GM12878 (cell line): ENCODE measurements at regions of chr15 and their contacts with region 1.

Region 1: DNA sequence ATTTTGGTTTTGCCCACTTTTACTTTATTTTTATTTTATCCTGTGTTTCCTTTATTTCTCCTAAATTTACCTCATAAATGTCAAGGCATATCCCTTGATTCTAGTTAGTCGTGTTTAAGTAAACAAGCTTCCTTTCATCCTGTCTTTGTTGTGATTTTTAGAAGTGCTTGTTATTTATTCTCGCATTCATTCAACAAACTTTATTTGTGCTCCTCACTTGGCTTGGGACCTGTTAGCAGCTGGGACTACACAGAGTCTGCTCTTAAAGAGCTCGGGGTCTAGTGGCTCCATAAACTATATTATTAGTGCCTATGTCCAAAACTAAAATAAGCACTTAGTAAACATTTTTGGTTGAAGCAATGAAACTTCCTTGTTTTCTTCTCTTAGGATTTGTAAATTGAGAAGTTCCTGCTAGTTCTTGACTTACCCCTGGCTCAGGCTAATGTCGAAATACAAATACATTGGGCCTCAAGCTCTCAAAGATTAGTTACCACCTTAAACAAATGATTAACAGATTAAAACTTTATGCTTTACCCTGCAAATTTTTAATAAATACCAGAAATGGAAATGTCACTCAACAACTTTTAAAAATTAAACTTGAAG is 19.1 kb upstream of the DMXL2 start:
- DNase-seq: no peak
- ATAC-seq: no peak
- H3K4me3 ChIP-seq: no peak overlapping the region
- H3K27ac ChIP-seq: no peak overlapping the region
- H3K4me1 ChIP-seq: no peaks in the 10 kb centered on the region
- H3K27me3 ChIP-seq: no peaks in the 10 kb centered on the region
- CTCF ChIP-seq: no peak
- EP300 ChIP-seq: no peak
- POLR2A ChIP-seq: no peak
- RAD21 ChIP-seq: no peak

Region 2: DNA sequence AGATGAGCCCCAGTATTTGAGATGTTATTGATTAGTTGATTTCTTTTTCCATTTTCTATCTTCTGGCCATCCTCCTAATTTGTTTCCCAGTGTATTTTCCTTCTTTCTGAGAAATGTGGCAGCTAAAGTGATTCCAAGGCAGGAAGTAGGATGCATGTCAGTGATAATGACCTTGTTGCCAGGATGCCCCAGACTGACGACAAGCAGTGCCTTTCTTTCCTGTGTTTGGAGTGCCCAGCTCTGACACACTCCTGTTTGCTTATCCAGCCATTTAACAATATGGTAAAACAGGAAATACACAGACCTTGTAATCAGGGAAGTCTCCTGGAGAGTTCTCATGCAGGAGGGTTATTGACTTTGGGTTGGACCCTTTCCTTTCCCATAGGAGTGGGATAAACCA is 130.1 kb after region 1 on chr15:
- CTCF ChIA-PET with region 1: interaction called, 314 read pairs
- POLR2A ChIA-PET with region 1: no interaction called
- RAD21 ChIA-PET with region 1: interaction called, 232 read pairs
- SMC1A ChIA-PET with region 1: interaction called, 170 read pairs
- in situ Hi-C with region 1: loop called (anchors 5 kb)
- intact Hi-C with region 1: no loop called
- DNase-seq: no peak
- ATAC-seq: no peak
- H3K4me3 ChIP-seq: no peak overlapping the region
- H3K27ac ChIP-seq: no peak overlapping the region
- H3K4me1 ChIP-seq: no peaks in the 10 kb centered on the region
- H3K27me3 ChIP-seq: no peaks in the 10 kb centered on the region
- CTCF ChIP-seq: no peak
- EP300 ChIP-seq: no peak
- POLR2A ChIP-seq: no peak
- RAD21 ChIP-seq: no peak